ENCODE measurements at regions of chr3 and their contacts with region 1.

Region 1: DNA sequence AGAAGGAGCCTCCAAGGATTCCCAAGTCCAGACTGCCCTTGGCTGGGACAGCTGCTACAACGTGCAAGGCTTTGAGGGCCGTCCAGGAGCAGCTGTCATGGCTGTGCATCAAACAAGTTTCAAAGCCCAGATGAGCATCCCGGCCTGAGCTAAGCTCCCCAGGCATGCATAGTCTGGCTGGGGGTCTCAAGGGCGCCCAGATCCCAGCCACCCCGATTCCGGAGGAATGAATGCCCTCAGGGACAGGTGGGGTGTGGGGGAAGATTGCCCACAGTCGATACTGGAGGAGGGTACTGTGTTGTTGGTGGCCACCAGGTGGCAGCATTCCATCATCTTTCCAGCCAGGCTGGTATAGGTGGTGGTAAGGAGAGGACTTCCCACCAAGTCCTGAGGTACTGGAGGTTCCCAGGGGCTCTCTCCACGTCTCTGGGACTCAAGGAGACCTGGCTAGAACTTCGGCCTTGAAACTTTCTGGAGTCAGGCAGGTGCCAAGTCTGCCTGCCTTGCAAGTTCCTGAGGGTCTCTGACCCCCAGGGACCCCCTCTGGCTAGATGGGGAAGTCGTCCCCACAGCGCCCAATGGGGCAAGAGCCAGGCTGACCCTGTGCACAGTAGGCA is 32.8 kb downstream of the RBM5 start:
- DNase-seq: peak; percentile 80
- H3K4me3 ChIP-seq: no peak overlapping the region
- H3K27ac ChIP-seq: no peak overlapping the region
- H3K4me1 ChIP-seq: peaks cover 7% of the 10 kb centered on the region
- H3K27me3 ChIP-seq: no peaks in the 10 kb centered on the region
- CTCF ChIP-seq: peak; percentile 75 to 79
- POLR2A ChIP-seq: peak; percentile 77

Region 2: DNA sequence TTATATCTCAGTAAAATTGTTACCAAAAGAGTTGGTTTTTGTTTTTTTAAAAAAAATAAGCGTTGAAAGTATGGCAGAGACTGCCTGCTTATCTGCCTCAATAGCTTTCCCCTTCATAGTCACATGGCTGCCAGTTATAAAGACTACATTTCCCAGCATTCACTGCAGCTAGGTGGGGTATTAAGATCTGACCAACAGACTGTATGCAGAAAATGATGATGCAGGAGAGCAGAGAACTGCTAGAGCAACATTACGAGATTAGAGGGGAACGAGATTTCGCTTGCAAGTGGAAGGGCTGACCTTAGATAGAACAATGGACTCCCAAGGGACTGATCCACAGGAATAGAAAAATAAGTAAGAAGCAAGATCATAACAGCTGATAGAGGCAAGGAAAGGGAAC is 724.1 kb before region 1 on chr3:
- CTCF ChIA-PET with region 1: no interaction called
- POLR2A ChIA-PET with region 1: no interaction called
- dilution Hi-C with region 1: no loop called
- intact Hi-C with region 1: no loop called
- DNase-seq: peak; percentile 66
- H3K4me3 ChIP-seq: no peak overlapping the region
- H3K27ac ChIP-seq: no peak overlapping the region
- H3K4me1 ChIP-seq: peaks cover 7% of the 10 kb centered on the region
- H3K27me3 ChIP-seq: no peaks in the 10 kb centered on the region
- CTCF ChIP-seq: no peak
- POLR2A ChIP-seq: no peak

Region 3: DNA sequence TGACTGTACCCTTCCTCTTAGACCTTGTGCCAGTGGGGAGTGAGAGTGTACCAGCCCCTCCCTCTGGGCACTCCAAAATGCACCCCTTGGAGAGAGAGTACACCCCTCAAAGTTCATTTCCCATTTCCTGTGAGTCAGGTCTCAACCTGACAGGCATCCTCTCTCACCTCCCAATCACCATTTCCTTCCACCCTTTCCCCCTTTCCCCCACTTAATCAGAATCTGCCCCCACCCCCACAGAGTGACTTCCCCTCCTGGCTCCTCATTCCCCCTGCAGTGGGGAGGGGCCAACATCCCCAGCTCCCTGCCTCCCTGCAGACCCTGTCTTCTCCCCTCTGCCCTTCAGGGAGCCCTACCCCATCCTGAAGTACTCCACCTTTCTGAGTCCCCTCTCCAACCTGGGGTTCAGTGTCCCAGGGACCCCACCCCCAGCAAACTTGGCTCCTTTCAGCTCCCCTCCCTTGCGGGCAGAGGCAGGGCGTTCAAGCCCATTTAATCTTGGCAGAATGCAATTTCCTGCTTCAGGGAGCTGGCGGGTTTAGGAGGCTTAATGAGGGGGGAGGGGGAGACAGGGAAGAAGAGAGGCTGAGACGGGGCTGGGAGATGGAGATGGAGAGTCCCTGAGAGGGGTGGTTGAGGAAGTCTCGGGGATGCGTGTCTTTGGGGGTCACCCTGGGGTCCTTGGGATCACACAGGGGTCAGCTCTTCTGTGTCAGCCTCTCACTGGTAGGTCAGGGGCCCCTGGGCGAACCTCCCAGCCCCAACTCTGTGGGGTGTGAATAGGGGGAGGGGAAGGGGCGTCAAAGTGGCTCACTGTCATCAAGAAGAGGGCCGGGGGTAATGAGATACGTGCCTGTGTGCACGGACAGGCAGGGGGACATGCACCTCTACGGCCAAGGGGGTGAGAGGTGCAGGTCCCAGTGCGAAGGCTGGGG is 17.0 kb after region 1 on chr3:
- CTCF ChIA-PET with region 1: interaction called, 15 read pairs
- POLR2A ChIA-PET with region 1: no interaction called
- dilution Hi-C with region 1: no loop called
- intact Hi-C with region 1: loop called (anchors 2 kb)
- DNase-seq: peak; percentile 52
- H3K4me3 ChIP-seq: no peak overlapping the region
- H3K27ac ChIP-seq: peak overlapping the region; percentile 27
- H3K4me1 ChIP-seq: peaks cover 26% of the 10 kb centered on the region
- H3K27me3 ChIP-seq: no peaks in the 10 kb centered on the region
- CTCF ChIP-seq: no peak
- POLR2A ChIP-seq: no peak

Region 4: GRCh38 chr3:50405249-50405648 is 283.7 kb after region 1 on chr3:
- CTCF ChIA-PET with region 1: no interaction called
- POLR2A ChIA-PET with region 1: no interaction called
- dilution Hi-C with region 1: no loop called
- intact Hi-C with region 1: no loop called
- DNase-seq: no peak
- H3K4me3 ChIP-seq: no peak overlapping the region
- H3K27ac ChIP-seq: no peak overlapping the region
- H3K4me1 ChIP-seq: no peaks in the 10 kb centered on the region
- H3K27me3 ChIP-seq: no peaks in the 10 kb centered on the region
- CTCF ChIP-seq: no peak
- POLR2A ChIP-seq: no peak